A673 (cell line): ENCODE measurements at regions of chr2 and their contacts with region 1.

Region 1: GRCh38 chr2:241540771-241541561 is 17.6 kb upstream of the BOK start:
- DNase-seq: peak; percentile 75
- H3K4me3 ChIP-seq: peak overlapping the region; percentile 46
- H3K27ac ChIP-seq: no peak overlapping the region
- H3K4me1 ChIP-seq: peaks cover 20% of the 10 kb centered on the region
- H3K27me3 ChIP-seq: no peaks in the 10 kb centered on the region
- CTCF ChIP-seq: no peak

Region 2: DNA sequence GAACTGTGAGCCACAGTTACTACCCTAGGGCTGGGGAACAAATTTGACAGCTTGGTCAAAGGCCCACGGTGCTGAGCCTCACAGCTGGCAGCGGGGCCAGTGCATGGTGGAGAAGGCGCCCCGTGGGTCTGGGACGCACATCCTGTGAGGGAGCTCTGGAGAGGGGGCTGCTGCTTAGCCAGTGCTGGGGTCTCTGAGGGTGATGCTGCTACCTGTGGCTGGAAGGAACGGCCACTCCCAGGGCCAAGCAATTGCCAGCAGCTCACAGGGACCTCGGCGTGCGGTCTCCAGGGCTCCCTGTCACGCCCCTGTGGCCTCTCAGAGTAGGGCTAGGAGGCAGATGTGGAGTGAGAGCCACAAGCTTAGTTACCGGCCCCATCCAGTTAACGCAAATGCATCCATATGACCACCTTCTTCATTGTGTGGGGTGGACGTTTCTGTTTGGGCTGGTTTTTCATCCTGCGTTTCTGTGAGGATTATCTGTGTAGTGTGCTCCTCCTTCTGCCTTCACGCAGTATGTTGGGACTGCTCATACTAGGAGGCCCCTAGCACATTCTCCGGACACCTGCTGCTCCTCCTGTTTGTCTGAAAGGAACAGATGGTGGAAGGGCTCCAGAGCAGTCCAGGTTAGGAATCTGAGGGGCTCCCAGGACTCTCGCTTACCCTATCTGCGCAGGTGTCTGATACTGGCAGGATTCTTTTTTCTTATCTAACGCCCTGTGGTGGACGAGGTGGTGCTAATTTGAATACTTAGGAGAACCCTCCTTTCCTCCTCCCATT is 58.6 kb before region 1 on chr2:
- CTCF ChIA-PET with region 1: interaction called, 13 read pairs
- POLR2A ChIA-PET with region 1: no interaction called
- intact Hi-C with region 1: loop called (anchors 2 kb)
- DNase-seq: no peak
- H3K4me3 ChIP-seq: no peak overlapping the region
- H3K27ac ChIP-seq: no peak overlapping the region
- H3K4me1 ChIP-seq: no peaks in the 10 kb centered on the region
- H3K27me3 ChIP-seq: no peaks in the 10 kb centered on the region
- CTCF ChIP-seq: no peak

Region 3: GRCh38 chr2:241558532-241559322 is 17.8 kb after region 1 on chr2 and contains the start of gene BOK:
- CTCF ChIA-PET with region 1: no interaction called
- POLR2A ChIA-PET with region 1: no interaction called
- intact Hi-C with region 1: no loop called
- DNase-seq: no peak
- H3K4me3 ChIP-seq: peak within 1 kb of the TSS; percentile 72
- H3K27ac ChIP-seq: no peak within 1 kb of the TSS
- H3K4me1 ChIP-seq: no peaks in the 10 kb centered on the region
- H3K27me3 ChIP-seq: no peaks in the 10 kb centered on the region
- CTCF ChIP-seq: no peak
- total RNA-seq, gene BOK: 2.7 and 4.0 TPM in 2 replicates